Posterior vena cava (tissue), 2 donors: ENCODE measurements at regions of chr17 and their contacts with region 1.

Region 1: DNA sequence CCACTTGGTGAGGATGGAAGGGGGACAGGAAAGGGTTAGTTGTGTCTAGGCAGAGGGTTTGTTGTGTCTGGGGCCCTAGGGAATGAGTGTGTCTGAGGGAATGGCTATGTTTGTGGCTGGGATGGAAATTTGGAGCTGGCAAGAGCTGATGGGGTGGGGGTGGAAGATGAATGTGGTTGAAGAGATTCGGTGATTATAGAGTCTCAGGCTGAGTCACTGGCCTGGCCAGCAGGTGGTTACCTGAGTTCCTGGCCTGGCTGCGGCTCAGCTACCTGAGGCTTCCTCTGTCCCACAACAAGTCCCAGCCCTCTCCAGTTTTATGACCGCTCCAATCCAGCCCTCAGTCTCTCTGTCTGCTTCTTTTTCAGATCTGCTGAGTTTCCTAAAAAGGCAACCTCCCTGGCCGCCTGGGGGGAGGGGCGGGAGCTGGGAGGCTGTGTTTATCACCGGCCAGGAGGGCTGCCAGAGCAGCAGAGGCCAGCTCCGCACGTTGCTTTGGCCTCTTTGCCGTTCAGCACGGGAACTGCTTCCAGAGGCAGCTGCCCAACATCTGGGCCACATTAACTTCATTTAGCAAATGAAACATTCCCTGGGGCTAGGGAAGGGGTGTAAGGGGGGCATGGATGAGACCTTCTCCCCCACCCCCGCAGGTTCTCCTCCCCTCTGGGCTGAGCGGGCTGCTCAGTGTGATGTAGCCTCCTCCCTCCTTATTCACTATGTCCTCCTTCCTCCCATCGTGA is 21.8 kb downstream of the ITGB3 start:
- DNase-seq: peak; percentile 96

Region 2: DNA sequence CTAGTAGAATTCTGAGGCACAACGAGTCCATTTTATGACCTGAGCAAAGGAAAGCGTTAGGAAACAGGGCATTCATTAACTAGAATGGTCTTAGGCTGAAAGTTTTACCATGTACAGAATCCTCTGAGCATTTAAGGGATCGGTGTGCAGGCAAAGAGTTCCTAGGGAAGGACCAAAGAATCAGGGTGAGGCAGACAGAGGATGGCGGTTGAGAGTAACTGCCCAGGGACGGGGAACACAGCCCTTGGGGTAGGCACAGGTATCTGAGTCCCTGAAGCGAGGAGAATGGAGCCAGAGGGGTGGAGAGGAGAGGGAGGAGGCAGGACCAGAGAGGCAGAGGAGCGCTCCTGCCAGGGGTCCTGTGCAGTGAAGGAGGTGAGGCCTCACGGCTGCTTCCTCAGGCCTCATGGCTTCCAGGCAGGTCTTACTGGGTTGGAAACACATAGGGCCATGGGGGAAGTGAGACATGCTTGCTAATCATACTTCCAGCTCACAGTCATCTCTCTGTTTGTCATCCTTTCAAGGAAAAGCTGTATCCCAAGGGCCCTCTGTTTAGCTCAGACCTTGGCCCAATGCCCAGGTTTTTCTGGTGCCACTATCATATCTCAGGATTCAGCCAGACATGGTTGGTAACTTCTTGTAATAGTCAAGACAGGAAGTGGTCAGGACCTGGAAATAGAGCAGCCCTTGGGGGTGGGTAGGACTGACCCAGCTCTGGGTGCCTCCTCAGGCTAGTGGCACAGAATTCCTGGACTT is 35.6 kb before region 1 on chr17:
- intact Hi-C with region 1: loop called in 1 of 2 experiments (anchors 2 kb)
- DNase-seq: peak; percentile 94

Region 3: GRCh38 chr17:47295062-47295845 is 19.8 kb after region 1 on chr17:
- intact Hi-C with region 1: no loop called
- DNase-seq: no peak